GM10248 (cell line): ENCODE measurements at regions of chr2 and their contacts with region 1.

Region 1: DNA sequence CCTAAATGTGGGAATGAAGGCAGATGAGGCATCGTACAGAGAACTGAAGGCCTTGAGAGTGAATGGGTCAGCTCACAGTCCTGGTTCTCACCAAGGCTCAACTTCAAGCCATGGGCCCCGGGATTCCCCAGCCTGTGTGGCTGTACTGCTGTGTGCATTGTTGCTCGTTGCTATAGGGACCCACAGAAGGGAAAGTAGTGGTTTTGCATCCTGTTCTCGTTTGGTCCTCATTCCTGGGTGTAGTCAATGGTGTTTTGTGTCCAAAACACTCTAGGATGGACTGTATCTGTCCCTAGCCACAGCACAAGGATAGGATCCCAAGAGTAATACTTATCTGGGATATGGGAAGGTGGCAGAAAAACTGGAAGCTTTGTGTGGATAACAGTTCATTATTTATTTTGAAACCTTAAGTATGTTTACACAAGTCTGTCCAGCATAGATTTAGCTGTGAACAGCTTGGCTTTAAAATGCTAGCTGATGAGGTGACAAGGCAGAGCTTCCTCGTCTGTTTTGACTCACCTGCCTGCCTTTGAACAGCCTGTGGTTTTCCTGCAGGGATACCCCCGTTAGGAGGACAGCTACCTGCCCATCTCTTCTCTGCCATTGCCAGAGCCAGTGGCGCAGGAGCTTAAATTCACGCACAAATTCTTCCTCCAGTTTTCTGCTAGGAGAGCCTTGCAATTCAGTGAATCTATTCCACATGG is 85.0 kb downstream of the WDSUB1 start:
- DNase-seq: peak; percentile 79
- CTCF ChIP-seq: no peak

Region 2: GRCh38 chr2:159214321-159214865 is 12.9 kb after region 1 on chr2:
- CTCF ChIA-PET with region 1: interaction called, 10 read pairs
- POLR2A ChIA-PET with region 1: no interaction called
- DNase-seq: no peak
- CTCF ChIP-seq: no peak